Ovary (tissue), 10 donors: ENCODE measurements at regions of chr1 and their contacts with region 1.

Region 1: DNA sequence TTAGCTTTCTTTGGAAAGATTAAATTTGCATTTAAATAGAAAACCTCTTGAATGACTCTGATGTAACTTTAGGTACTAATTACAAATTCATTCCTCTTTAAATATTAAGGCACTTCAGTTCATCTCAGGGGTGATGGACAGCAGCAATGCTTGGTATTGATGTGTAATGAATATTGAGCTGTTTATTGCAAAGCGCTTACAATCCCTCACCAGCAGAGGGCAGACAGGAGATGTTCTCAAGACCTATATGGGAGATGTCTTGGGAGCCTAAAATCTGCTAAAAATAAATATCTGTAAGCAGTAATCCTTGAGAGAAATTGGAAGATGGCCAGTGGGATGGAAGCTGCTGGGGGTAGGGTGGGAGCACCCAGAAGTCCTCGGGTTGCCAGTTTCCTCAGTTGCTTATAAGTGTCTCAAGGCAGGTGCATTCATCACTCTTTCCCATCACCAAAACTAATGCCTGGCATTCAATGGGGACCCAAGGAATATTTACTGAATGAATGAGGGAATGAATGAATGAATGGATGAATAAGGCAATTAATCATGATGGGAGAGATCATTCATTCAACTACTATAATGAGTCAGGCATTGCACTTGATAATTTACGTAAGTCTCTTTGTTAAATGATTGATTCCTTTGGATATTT is 2.3 kb downstream of the KLHDC8A start:
- DNase-seq: peak in 3 of 5 donors; percentile 63 to 81 (median 77)
- H3K4me3 ChIP-seq: no peak overlapping the region
- H3K27ac ChIP-seq: peak overlapping the region in 1 of 2 donors; percentile 84
- H3K4me1 ChIP-seq: peaks cover 10% of the 10 kb centered on the region
- H3K27me3 ChIP-seq: no peaks in the 10 kb centered on the region
- CTCF ChIP-seq: peak; percentile 70 to 88 (median 86)
- EP300 ChIP-seq: no peak
- POLR2A ChIP-seq: no peak

Region 2: GRCh38 chr1:205387845-205388244 is 33.5 kb after region 1 on chr1:
- intact Hi-C with region 1: loop called in 1 of 4 experiments (anchors 5 kb)
- DNase-seq: no peak
- H3K4me3 ChIP-seq: no peak overlapping the region
- H3K27ac ChIP-seq: no peak overlapping the region
- H3K4me1 ChIP-seq: peaks cover 14% of the 10 kb centered on the region
- H3K27me3 ChIP-seq: no peaks in the 10 kb centered on the region
- CTCF ChIP-seq: no peak
- EP300 ChIP-seq: no peak
- POLR2A ChIP-seq: no peak

Region 3: GRCh38 chr1:205430696-205431305 is 76.4 kb after region 1 on chr1:
- intact Hi-C with region 1: loop called in 2 of 4 experiments (anchors 5 to 10 kb)
- DNase-seq: peak; percentile 60 to 84 (median 79)
- H3K4me3 ChIP-seq: peak overlapping the region; percentile 46
- H3K27ac ChIP-seq: no peak overlapping the region
- H3K4me1 ChIP-seq: no peaks in the 10 kb centered on the region
- H3K27me3 ChIP-seq: no peaks in the 10 kb centered on the region
- CTCF ChIP-seq: peak; percentile 70 to 87 (median 86)
- EP300 ChIP-seq: no peak
- POLR2A ChIP-seq: no peak

Region 4: DNA sequence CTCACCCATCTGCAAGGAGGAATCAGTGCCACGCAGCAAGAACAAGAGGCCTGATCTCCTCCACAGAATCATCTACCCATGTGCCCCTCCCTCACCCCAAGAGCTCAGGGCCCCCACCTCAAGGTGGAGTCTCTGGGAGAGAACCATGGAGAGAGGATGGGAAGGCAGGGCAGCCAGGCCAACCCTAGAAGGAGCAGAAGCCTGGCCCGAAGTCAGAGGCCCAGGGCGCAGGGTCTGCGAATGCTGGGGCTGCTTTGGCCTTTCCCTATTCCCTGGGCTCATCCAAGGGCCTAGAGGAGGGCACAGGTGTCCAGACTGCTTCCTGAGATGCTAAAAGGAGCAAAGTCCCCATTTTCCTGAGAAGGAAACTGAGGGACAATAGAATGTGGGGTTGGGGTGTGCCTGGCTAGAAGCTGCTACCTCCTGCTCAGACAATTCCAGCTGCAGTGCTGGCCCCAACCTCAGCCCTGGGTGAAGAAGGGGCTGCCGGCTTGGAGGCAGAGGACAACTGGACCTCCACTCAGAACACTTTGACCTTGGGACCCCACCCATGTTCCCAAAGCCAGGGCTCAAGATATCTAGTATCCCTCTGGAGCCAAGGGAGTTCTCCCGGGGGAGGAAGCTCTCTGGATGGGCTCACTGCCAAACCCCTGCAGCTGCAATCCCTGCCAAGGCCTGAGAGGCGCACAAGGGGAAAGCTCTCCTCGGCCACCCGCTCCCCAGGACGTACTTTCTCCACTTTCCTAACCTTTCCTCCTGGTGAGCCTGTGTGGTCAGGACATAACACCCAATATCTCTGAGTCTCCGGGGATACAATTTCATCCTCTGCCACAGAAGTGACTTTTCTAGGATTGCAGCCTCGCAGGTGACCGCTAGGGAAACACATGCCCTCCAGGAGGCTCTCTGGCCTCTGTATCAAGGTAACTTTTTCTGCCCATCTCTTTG is 84.1 kb after region 1 on chr1:
- intact Hi-C with region 1: loop called in 2 of 4 experiments (anchors 5 to 10 kb)
- DNase-seq: peak; percentile 91 to 93 (median 91)
- H3K4me3 ChIP-seq: no peak overlapping the region
- H3K27ac ChIP-seq: peak overlapping the region; percentile 27 to 31
- H3K4me1 ChIP-seq: peaks cover 12% of the 10 kb centered on the region
- H3K27me3 ChIP-seq: no peaks in the 10 kb centered on the region
- CTCF ChIP-seq: peak; percentile 67 to 90 (median 86)
- EP300 ChIP-seq: no peak
- POLR2A ChIP-seq: no peak